Stomach (tissue), 19 donors: ENCODE measurements at regions of chr9 and their contacts with region 1.

Region 1: DNA sequence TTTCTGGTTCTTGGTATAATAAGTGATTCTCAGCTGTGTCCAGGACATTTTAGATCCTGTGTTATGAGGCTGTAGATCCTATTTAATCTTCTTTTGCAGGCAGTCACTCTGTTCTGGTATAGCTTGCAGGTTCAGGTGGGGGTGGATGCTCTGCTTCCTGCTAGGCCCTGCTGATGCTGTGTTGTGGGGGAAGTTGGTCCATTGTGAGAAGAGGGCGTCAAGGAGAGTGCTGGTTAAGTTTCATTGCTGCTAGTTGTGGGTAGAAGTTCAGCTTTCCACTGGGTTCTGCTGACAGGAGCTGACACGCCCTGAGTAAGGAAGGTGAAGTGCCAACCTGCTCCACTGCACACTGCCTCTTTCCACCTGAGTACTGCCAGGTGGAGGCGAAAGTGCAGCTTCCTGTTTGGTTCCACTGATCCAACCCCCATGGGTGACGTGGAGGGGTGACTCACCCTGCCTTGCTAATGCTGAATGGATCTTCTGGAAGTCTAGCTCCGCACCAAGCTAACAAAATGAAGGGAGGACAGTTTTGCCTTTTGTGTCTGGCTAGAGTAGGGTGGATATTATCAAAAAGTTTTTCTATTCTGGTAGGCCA is 16.3 kb downstream of the NMRK1 start:
- DNase-seq: peak; percentile 70 to 82
- H3K4me3 ChIP-seq: no peak overlapping the region
- H3K27ac ChIP-seq: peak overlapping the region in 1 of 5 donors; percentile 18
- H3K4me1 ChIP-seq: no peaks in the 10 kb centered on the region
- H3K27me3 ChIP-seq: no peaks in the 10 kb centered on the region
- CTCF ChIP-seq: no peak
- EP300 ChIP-seq: no peak
- POLR2A ChIP-seq: no peak

Region 2: GRCh38 chr9:74773886-74774479 is 297.6 kb before region 1 on chr9:
- intact Hi-C with region 1: loop called (anchors 5 kb)
- DNase-seq: peak; percentile 86 to 91
- H3K4me3 ChIP-seq: no peak overlapping the region
- H3K27ac ChIP-seq: no peak overlapping the region
- H3K4me1 ChIP-seq: peaks cover 0 to 8% (median 0%) of the 10 kb centered on the region in 4 donors
- H3K27me3 ChIP-seq: peaks cover 0 to 8% (median 0%) of the 10 kb centered on the region in 3 donors
- CTCF ChIP-seq: peak in 5 of 7 experiments; percentile 71 to 90 (median 80)
- EP300 ChIP-seq: no peak
- POLR2A ChIP-seq: no peak

Region 3: DNA sequence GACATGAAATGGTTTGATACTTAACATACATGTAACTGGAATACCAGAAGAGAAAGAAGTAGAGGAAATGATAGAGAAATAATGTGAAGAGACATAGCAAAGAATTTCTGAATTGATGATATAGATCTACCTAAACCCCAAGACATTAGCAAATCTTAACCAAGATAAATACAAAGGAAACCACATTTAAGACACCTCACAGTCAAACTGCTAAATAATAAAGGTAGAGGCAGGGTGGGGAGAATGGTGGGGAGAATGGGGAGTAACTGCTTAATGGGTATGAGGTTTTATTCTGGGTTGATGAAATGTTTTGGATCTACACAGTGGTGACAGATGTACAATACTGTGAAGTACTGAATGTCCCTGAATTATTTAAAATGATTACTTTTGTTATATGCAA is 61.1 kb before region 1 on chr9:
- intact Hi-C with region 1: loop called (anchors 10 kb)
- DNase-seq: no peak
- H3K4me3 ChIP-seq: no peak overlapping the region
- H3K27ac ChIP-seq: no peak overlapping the region
- H3K4me1 ChIP-seq: no peaks in the 10 kb centered on the region
- H3K27me3 ChIP-seq: no peaks in the 10 kb centered on the region
- CTCF ChIP-seq: no peak
- EP300 ChIP-seq: no peak
- POLR2A ChIP-seq: no peak